Activated naive CD4-positive, alpha-beta T cell treated with anti-CD3 and anti-CD28 coated beads for 36 hours (primary cell): ENCODE measurements at regions of chr11 and their contacts with region 1.

Region 1: DNA sequence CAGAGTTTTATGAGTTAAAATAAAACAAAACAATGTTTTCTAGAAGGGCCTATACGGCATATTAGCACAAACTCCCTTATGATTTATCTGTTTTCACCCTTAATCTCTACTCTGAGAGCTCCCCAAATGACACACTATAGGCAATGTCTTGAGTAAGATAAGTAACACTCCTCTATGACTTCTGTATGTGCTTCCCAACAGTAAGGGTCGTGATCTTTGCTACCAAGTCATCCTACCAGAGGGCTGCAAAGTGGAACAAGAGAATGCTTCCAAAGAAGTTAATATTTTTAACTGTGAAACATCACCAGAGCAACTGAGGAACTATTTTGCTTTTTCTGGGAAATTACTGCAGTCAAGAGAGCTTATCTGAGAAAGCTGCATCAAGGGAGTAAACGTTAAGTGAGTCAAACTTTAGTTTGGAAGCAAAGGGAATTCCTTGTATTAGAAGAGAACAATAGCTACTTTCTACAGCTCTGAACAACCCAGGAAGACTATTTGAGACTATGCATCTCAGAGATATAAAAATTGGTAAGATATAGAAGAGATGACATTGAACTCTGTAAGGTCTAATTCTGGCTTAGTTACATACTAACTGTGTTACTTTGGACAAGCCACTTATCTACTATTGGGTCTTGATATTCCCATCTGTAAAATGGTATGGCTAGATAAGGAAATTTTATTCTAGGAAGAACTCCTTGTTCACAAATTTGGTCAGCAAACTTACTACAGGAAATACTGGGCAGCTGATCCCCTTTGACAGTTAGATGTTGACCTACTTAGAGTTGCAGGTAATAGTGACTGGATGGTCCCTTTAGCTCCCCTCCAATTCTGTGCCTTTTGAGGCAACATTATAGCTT is 43.7 kb upstream of the CCDC34 start:
- DNase-seq: no peak
- H3K4me3 Mint-ChIP-seq: no peak overlapping the region
- H3K27ac Mint-ChIP-seq: no peak overlapping the region
- H3K4me1 Mint-ChIP-seq: no peaks in the 10 kb centered on the region
- H3K27me3 Mint-ChIP-seq: peaks cover 3% of the 10 kb centered on the region

Region 2: DNA sequence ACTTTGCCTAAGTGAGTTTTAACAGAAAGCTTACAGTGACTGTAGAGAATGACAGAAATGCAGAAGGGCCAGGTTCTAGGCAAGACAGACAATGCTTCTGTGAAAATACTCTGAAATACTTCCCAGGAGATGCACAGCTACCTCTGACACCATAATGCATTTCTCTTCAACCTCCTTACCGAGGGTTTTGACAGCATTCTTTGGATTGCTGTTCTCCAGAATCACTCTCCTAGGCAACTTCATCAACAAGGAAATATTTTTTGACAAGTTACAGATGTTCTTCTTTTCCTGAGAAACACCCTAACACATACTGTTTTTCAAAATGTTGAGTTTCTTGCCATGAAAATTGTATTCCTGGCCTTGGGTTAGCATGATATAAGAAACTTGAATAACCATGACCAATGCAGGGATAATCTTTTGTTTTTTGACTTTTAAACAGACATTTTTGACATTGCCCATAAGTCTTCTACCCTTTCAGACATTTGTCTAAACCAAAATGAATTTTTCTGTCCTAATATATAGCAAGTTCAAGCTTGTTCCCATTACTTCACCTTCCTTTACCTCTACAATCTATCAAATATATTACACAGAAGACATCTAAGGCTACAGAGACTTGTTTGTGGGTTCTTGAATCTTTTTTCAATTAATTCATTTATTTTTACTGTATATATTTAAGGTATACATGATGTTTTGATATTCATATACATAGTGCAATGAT is 151.8 kb before region 1 on chr11:
- CTCF ChIA-PET with region 1: no interaction called
- intact Hi-C with region 1: loop called (anchors 5 kb)
- DNase-seq: no peak
- H3K4me3 Mint-ChIP-seq: no peak overlapping the region
- H3K27ac Mint-ChIP-seq: no peak overlapping the region
- H3K4me1 Mint-ChIP-seq: no peaks in the 10 kb centered on the region
- H3K27me3 Mint-ChIP-seq: peaks cover 25% of the 10 kb centered on the region